ENCODE measurements at regions of chrX and their contacts with region 1.

Region 1: DNA sequence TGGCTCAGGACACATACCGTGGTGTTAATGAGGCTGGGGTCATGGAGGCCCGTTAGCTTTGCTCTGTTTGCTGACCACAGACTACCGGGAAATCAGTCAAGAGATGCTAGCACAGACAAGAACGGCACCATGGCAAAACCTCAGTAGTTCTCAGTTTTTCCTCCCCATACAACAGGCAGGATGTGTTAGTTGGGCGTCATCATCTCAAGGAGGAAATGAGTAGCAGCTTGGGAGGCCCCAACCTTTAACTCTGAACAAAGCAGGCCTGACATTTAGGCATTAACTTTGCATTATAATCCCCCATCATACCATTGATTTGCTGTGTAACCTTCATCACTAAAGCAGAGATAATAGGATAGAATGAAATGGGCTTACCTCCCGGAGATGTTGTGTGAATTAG is 714.2 kb downstream of the RPA4 start:
- DNase-seq: peak; percentile 8
- H3K4me3 Mint-ChIP-seq: no peak overlapping the region
- H3K27ac Mint-ChIP-seq: peak overlapping the region; percentile 90
- H3K4me1 Mint-ChIP-seq: peaks cover 18% of the 10 kb centered on the region
- H3K27me3 Mint-ChIP-seq: no peaks in the 10 kb centered on the region

Region 2: DNA sequence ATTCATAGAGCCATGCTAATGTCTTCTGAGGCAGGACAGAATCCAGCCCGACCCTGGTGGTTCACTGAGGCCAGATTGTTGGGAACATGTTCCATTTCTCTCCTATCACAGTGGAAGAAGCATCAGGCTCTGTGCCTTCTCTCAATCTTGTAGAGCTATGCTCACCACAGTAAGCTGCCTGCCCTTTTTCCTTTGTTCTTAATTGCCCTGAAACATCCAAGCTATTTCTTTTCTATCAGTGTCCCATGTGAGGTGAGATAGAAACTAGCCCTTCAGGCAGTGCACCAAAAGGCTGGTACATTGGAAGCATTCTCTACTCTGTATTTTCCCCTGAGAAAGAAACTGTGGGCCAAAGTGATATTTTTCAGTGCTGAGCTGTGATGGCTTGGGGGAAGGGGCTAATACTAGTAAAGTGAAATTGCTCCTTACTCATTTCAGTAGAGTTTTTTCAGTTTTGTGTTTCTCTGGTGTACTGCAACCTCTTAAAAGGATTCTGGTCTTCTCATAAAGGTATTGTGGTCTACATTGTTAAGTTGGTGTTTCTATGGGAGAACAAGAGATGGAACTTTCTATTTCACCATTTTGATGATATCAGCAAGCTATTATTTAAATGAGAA is 103.1 kb before region 1 on chrX:
- intact Hi-C with region 1: loop called (anchors 2 kb)
- DNase-seq: no peak
- H3K4me3 Mint-ChIP-seq: no peak overlapping the region
- H3K27ac Mint-ChIP-seq: no peak overlapping the region
- H3K4me1 Mint-ChIP-seq: peaks cover 7% of the 10 kb centered on the region
- H3K27me3 Mint-ChIP-seq: no peaks in the 10 kb centered on the region

Region 3: DNA sequence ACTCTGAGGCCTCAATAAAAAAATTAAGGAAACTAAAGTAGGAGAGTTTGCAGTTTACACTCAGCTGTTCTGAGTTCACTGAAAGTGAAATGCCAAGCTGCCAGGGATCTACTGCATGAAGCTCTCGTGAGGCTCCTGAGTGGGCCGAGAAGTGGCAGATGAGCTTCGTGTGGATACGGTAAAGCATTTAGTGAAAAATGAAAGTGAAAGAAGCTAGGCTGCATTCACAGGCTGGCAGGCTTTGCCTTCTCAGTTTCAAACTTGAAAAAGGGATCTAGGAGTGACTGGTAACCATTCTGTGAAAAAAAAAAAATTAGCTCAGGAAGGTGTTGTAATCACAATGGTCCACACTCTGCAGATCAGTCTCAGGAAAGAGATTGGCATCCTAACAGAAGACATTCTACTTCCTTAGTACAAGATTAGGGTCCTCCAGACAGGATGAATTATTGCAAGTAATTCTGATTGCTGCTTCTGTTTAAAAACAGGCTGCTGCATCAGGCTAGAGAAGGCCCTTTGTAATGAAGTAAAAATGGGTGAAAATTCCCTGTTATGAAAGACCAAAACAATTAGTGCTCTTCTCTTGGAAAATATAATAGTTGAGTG is 34.3 kb before region 1 on chrX:
- intact Hi-C with region 1: loop called (anchors 5 kb)
- DNase-seq: peak; percentile 27
- H3K4me3 Mint-ChIP-seq: peak overlapping the region; percentile 69
- H3K27ac Mint-ChIP-seq: peak overlapping the region; percentile 68
- H3K4me1 Mint-ChIP-seq: peaks cover 11% of the 10 kb centered on the region
- H3K27me3 Mint-ChIP-seq: no peaks in the 10 kb centered on the region